Breast epithelium (tissue), 4 donors: ENCODE measurements at regions of chr3 and their contacts with region 1.

Region 1: GRCh38 chr3:111768571-111769100 is 90.4 kb upstream of the PHLDB2 start:
- DNase-seq: peak in 1 of 2 donors; percentile 22
- H3K4me3 ChIP-seq: no peak overlapping the region
- H3K27ac ChIP-seq: peak overlapping the region; percentile 37 to 68
- H3K4me1 ChIP-seq: peaks cover 0 to 5% of the 10 kb centered on the region in 2 donors
- H3K27me3 ChIP-seq: no peaks in the 10 kb centered on the region
- CTCF ChIP-seq: no peak
- POLR2A ChIP-seq: no peak

Region 2: GRCh38 chr3:111068574-111068973 is 700.1 kb before region 1 on chr3:
- intact Hi-C with region 1: no loop called
- DNase-seq: no peak
- H3K4me3 ChIP-seq: no peak overlapping the region
- H3K27ac ChIP-seq: no peak overlapping the region
- H3K4me1 ChIP-seq: peaks cover 0 to 3% of the 10 kb centered on the region in 2 donors
- H3K27me3 ChIP-seq: no peaks in the 10 kb centered on the region
- CTCF ChIP-seq: no peak
- POLR2A ChIP-seq: no peak

Region 3: GRCh38 chr3:111730143-111730542 is 38.5 kb before region 1 on chr3:
- intact Hi-C with region 1: loop called (anchors 2 kb)
- DNase-seq: no peak
- H3K4me3 ChIP-seq: no peak overlapping the region
- H3K27ac ChIP-seq: no peak overlapping the region
- H3K4me1 ChIP-seq: peaks cover 0 to 3% of the 10 kb centered on the region in 2 donors
- H3K27me3 ChIP-seq: no peaks in the 10 kb centered on the region
- CTCF ChIP-seq: no peak
- POLR2A ChIP-seq: no peak

Region 4: GRCh38 chr3:111824351-111824750 is 55.7 kb after region 1 on chr3:
- intact Hi-C with region 1: no loop called
- DNase-seq: no peak
- H3K4me3 ChIP-seq: no peak overlapping the region
- H3K27ac ChIP-seq: no peak overlapping the region
- H3K4me1 ChIP-seq: no peaks in the 10 kb centered on the region
- H3K27me3 ChIP-seq: no peaks in the 10 kb centered on the region
- CTCF ChIP-seq: no peak
- POLR2A ChIP-seq: no peak